ENCODE measurements at regions of chr6 and their contacts with region 1.

Region 1: DNA sequence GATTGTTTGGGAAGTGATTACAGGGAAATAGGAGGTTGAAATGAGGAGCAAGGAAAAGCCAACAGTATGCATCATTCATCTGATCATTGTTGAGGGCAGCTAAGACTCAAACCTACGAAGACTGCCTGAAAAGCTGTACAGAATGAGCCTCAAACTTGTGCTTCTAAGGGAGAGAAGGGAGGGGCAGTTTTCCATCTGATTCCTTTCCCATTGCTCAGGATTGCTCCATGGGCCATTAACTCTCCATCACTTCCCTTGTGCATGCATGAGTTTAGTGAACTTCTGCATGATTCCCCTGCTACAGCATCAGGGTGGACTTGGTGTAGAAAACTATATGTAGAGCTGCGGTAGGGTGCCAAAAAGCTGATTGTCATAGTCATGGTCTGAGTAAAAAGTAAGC is 742.7 kb upstream of the SLC35B3 start:
- DNase-seq: no peak
- H3K4me3 Mint-ChIP-seq: no peak overlapping the region
- H3K27ac Mint-ChIP-seq: no peak overlapping the region
- H3K4me1 Mint-ChIP-seq: no peaks in the 10 kb centered on the region
- H3K27me3 Mint-ChIP-seq: no peaks in the 10 kb centered on the region

Region 2: GRCh38 chr6:9985481-9985880 is 807.4 kb after region 1 on chr6:
- intact Hi-C with region 1: loop called (anchors 5 kb)
- DNase-seq: no peak
- H3K4me3 Mint-ChIP-seq: no peak overlapping the region
- H3K27ac Mint-ChIP-seq: no peak overlapping the region
- H3K4me1 Mint-ChIP-seq: no peaks in the 10 kb centered on the region
- H3K27me3 Mint-ChIP-seq: no peaks in the 10 kb centered on the region

Region 3: GRCh38 chr6:10733151-10733715 is 1555.2 kb after region 1 on chr6:
- intact Hi-C with region 1: no loop called
- DNase-seq: no peak
- H3K4me3 Mint-ChIP-seq: no peak overlapping the region
- H3K27ac Mint-ChIP-seq: no peak overlapping the region
- H3K4me1 Mint-ChIP-seq: no peaks in the 10 kb centered on the region
- H3K27me3 Mint-ChIP-seq: no peaks in the 10 kb centered on the region